A673 (cell line): ENCODE measurements at regions of chr1 and their contacts with region 1.

Region 1: DNA sequence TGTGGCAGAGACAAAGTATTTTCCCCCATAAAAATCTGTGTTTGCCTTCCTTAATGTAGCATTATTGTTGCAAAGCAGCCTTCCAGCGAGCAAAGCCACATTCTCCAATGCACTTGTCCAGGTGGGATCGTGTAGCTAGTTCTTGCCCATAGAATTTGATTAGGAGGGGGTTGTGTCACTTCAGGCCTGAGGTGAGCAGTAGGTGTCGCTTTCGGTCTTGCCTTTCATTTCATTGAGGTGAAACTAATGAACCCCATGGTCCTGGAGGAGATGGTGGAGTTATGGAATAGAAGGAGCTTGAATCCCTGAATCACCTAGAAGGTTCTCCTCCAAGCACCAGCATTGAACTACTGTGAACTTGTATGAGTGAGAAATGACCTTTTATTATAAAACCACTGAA is 318.9 kb upstream of the PBX1 start:
- DNase-seq: no peak
- H3K4me3 ChIP-seq: no peak overlapping the region
- H3K27ac ChIP-seq: no peak overlapping the region
- H3K4me1 ChIP-seq: no peaks in the 10 kb centered on the region
- H3K27me3 ChIP-seq: no peaks in the 10 kb centered on the region
- CTCF ChIP-seq: no peak

Region 2: DNA sequence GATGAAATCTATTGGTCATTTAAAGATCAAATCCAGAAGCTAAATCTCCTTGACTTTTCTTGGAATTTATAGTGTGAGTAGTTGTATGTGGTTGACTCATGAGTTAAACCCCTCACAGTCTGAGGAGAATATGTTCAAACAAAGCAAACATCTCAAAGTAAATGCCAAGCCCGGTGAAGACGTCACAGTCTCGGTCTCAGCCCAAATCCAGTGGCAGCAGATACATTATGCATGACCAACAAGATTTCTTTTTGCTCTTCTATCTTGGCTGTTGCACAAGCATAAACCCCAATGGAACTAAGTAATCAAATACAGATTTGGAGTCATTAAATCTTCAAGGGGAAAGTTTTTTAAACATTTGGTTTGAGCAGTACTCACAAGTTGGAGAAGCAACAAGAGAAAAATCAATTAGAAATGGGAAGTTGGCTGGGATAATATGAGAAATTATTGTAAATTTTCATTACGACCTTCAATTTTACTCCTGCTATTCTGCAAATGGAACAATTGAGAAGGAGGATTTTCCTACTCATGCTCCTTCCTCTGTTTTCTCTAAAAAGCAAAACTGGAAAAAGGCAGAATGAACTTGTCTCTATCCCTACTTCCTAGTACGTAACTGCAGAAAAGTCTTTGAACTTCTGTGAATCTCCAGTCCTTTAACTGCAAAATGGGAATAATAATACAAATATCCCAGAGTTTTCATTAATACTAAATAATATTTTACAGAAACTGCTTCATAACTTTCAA is 342.5 kb before region 1 on chr1:
- CTCF ChIA-PET with region 1: no interaction called
- POLR2A ChIA-PET with region 1: no interaction called
- intact Hi-C with region 1: no loop called
- DNase-seq: peak; percentile 13
- H3K4me3 ChIP-seq: no peak overlapping the region
- H3K27ac ChIP-seq: no peak overlapping the region
- H3K4me1 ChIP-seq: no peaks in the 10 kb centered on the region
- H3K27me3 ChIP-seq: no peaks in the 10 kb centered on the region
- CTCF ChIP-seq: no peak

Region 3: DNA sequence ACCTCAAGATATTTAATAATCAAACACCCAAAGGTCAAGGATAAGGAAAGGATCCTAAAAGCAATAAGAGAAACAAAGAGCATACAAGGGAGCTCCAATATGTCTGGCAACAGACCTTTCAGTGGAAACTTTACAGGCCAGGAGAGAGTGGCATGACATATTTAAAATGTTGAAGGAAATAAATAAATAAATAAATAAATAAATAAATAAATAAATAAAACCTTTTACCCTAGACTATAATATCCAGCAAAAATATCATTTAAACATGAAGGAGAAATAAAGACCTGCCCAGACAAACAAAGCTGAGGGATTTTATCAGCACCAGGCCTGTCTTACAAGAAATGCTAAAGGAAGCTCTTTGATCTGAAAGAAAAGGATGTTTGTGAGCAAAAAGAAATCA is 48.9 kb before region 1 on chr1:
- CTCF ChIA-PET with region 1: no interaction called
- POLR2A ChIA-PET with region 1: no interaction called
- intact Hi-C with region 1: loop called (anchors 2 kb)
- DNase-seq: no peak
- H3K4me3 ChIP-seq: no peak overlapping the region
- H3K27ac ChIP-seq: no peak overlapping the region
- H3K4me1 ChIP-seq: no peaks in the 10 kb centered on the region
- H3K27me3 ChIP-seq: no peaks in the 10 kb centered on the region
- CTCF ChIP-seq: no peak

Region 4: GRCh38 chr1:164563721-164564360 is 323.8 kb after region 1 on chr1:
- CTCF ChIA-PET with region 1: no interaction called
- POLR2A ChIA-PET with region 1: no interaction called
- intact Hi-C with region 1: no loop called
- DNase-seq: no peak
- H3K4me3 ChIP-seq: peak overlapping the region; percentile 82
- H3K27ac ChIP-seq: no peak overlapping the region
- H3K4me1 ChIP-seq: peaks cover 26% of the 10 kb centered on the region
- H3K27me3 ChIP-seq: no peaks in the 10 kb centered on the region
- CTCF ChIP-seq: no peak